ENCODE measurements at regions of chr3 and their contacts with region 1.

Region 1: DNA sequence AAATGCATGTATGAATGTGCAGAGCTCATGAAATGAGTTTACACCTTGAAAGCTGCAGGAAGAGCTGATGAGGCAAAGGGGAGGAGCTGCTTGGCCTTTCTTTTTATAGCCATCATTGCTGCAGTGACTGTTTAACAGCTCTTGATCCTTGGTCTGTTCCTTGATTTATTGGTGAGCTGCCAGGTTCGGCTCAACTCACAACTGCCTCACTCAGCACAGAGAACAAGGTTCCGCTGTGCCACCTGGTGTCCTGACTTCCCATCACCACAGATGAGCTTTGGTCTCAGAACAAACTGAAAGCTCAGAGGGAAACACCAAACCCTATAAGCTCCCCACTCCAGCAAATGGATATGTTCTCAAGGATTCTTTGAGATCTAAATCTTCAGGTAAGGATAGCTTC is 626.1 kb downstream of the MAGI1 start:
- DNase-seq: peak; percentile 90
- H3K4me3 ChIP-seq: no peak overlapping the region
- H3K27ac ChIP-seq: peak overlapping the region in 3 of 4 donors; percentile 68 to 80 (median 74)
- H3K4me1 ChIP-seq: peaks cover 0 to 71% (median 52%) of the 10 kb centered on the region in 4 donors
- H3K27me3 ChIP-seq: no peaks in the 10 kb centered on the region
- CTCF ChIP-seq: peak; percentile 17 to 57 (median 41)
- EP300 ChIP-seq: peak in 2 of 4 donors; percentile 37 to 59
- POLR2A ChIP-seq: no peak

Region 2: DNA sequence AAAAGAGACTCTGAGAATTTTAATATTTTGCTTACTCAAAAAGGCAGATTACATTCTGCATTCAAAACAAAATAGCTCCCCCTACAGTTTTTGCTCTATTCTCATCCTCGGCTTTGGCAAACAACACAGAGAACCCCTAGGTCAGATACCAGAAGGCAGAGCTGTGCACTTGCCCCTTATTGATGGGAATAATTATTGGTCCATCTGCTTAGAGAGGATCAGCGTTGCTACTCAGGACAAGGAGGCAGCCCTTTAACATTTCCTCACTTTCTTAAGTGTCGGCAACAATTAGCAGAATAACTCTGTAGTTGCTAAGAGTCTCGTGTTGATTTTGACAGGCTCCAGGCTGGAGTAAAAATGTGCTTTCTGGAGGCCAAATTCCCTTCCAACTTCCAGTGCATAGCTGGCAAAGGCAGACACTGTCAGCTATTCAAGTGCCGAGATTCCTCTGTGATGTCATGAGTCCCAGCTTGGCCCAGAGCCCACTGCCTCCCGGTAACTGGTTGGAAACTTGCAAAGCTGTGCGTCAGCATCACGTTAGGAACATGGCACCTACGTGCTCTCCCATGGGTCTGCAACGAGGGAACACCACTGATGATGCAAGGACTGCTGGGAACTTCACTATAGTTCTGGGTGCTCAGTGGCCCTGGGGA is 242.1 kb before region 1 on chr3:
- intact Hi-C with region 1: loop called (anchors 5 kb)
- DNase-seq: peak; percentile 98
- H3K4me3 ChIP-seq: no peak overlapping the region
- H3K27ac ChIP-seq: peak overlapping the region; percentile 62 to 82 (median 66)
- H3K4me1 ChIP-seq: peaks cover 0 to 24% (median 21%) of the 10 kb centered on the region in 4 donors
- H3K27me3 ChIP-seq: no peaks in the 10 kb centered on the region
- CTCF ChIP-seq: peak in 3 of 4 experiments; percentile 7 to 42 (median 29)
- EP300 ChIP-seq: peak; percentile 100
- POLR2A ChIP-seq: no peak

Region 3: DNA sequence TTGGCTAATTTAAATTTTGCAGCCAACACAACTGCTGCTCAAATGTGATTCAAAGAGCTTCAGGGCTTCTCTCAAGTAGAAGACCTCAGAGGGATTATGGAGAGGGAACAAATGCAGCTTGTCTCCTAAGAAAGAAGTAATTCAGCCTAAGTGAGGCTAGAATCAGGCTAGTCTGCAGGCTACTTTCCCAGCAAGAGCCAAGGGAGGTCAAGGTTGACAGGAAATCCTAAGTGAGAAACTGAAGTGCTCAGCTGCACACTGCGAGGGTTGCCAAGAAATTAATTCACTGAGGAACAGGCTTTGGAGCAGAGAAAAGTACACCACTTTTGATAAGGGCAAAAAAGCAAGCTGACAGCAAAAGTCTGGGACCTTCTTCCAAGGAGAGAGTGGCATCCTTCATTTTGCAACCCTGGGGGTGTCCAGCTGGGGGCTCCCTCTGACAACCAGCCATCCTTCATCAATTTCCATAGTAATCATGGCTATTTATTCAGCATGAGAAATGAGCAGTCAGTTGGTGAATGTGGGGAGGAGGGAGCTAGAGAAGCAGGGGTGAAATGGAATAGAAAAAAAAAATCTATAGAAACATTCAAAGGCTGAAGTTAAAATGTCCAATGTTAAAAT is 78.4 kb before region 1 on chr3:
- intact Hi-C with region 1: loop called (anchors 2 kb)
- DNase-seq: no peak
- H3K4me3 ChIP-seq: no peak overlapping the region
- H3K27ac ChIP-seq: peak overlapping the region in 3 of 4 donors; percentile 11 to 51 (median 38)
- H3K4me1 ChIP-seq: peaks cover 0 to 27% (median 9%) of the 10 kb centered on the region in 4 donors
- H3K27me3 ChIP-seq: no peaks in the 10 kb centered on the region
- CTCF ChIP-seq: peak in 1 of 4 experiments; percentile 19
- EP300 ChIP-seq: no peak
- POLR2A ChIP-seq: no peak

Region 4: GRCh38 chr3:65371053-65371452 is 41.5 kb before region 1 on chr3:
- intact Hi-C with region 1: loop called (anchors 2 kb)
- DNase-seq: no peak
- H3K4me3 ChIP-seq: no peak overlapping the region
- H3K27ac ChIP-seq: peak overlapping the region in 3 of 4 donors; percentile 76 to 85 (median 81)
- H3K4me1 ChIP-seq: peaks cover 0 to 40% (median 26%) of the 10 kb centered on the region in 4 donors
- H3K27me3 ChIP-seq: no peaks in the 10 kb centered on the region
- CTCF ChIP-seq: no peak
- EP300 ChIP-seq: peak; percentile 95 to 99 (median 98)
- POLR2A ChIP-seq: no peak